ENCODE measurements at regions of chr5 and their contacts with region 1.

Region 1: DNA sequence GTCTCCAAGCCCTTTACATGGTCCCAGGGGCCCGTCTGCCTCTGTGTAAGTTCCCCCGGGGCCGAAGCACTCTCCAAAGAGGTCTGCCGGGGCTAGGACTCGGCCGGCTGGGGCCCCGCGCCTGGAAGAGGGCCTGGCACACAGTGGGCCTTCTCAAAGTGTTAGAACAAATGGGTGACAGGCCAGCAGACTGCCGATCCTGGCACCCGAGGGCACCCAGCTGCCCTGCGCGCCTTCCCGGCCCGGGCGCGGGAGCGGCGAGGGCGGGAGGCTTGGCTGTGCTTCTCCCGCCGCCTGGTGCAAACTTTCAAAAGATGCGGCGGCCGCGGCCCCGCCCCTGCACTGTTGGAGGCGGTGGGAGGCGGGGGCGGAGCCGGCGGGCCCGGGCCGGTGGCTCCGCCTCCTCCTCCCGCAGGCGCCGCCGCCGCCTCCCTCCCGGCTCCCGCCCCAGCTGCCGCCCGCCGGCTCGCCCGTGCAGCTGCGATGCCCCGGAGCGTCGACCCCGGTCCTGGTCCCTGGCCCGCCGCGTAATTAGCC is at the start of gene NEURL1B:
- DNase-seq: peak; percentile 85 to 89
- ATAC-seq: peak; percentile 55
- total RNA-seq, gene NEURL1B: 60.5 to 90.8 TPM

Region 2: DNA sequence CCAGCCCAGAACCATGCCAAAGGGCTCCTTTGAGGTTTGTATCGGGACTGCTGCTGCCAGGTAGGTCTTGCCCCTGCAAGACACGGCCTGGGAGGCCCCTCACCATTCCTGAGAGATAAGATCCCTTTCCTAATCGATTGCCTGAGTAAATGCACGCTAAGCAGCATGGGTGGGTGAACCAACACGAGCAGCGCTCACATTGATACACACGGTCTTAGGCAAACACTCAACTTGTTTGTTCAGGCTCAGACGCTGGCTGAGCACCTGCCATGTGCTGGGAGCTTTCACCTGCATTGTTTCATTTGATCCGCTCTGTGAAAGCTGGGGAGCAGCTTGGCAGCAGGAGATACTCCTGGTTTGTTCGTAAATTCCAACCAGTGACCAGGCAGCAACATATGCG is 76.7 kb before region 1 on chr5:
- intact Hi-C with region 1: loop called in 1 of 2 experiments (anchors 10 kb)
- DNase-seq: peak in 1 of 2 donors; percentile 35
- ATAC-seq: peak; percentile 60

Region 3: DNA sequence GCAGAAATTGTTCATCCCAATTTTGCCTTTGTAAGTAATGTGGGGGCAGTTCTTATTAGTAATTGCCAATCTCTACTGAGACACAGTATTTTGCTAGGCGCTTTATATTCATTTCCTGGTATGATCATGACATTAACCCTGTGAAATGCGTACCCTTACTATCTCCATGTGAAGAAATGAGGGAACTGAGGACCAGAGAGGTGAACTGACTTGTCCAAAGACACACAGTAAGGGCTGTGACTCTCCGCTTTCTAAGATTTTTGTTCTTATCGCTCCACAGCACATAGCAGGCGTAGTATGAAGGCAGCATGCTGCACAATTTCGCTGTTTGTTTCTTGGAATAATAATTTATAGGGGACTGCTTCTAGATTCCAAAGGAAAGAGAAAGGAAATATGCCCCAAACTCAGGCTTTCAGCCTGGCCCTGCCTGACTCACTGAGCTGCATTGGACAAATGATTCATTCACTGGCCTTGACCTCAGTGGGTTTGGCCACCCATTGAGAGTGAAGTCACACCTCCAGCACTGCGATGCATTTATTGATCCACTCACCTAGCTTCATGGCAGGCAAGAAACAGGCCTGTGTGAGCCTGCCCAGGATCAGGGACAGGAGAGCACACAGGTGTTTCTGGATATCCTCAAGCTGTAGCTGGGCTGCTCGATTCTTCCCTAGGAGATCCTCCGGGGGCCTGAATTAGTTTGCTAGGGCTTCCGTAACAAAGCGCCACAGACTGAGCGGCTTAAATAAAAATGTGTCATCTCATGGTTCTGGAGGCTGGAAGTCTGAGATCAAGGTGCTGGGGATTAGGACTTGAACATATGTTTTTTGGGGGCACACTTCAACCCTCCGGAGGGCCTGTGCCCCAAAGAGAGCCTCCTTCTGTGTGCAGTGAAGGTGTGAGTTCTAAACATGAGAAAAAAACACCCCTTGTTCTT is 137.3 kb after region 1 on chr5:
- intact Hi-C with region 1: no loop called
- DNase-seq: peak; percentile 49 to 79
- ATAC-seq: peak; percentile 37

Region 4: DNA sequence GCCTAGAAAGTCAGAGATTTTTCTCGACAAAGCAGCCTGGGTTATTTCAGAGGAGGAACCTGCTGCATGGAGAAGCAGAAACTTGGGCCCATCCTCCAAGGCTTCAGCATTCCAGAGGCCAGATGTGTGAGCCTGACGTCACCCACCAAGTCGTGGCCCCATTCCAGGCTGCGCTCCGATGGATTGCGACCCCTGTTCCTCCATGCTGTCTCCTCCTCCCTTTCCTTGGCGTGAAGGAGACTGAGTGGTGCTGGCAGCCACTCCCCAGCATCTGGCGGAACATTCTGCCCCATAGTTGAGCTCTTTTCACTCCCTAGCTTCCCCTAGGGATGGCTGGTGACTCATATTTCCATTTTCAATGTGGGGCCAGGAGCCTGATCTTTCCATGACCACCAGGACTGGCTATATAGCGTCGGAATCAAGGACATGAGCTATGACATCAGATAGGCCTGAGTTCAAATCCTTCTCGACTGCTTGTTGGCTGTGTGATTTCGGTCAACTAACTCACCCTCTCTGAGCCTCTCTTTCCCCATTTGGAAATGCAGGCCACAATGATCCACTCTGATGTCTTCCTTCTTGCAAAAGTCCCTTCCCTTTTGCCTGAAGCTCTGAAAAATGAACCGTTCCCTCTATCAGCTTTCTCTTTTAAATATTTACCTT is 154.6 kb after region 1 on chr5:
- intact Hi-C with region 1: no loop called
- DNase-seq: peak; percentile 59 to 79
- ATAC-seq: no peak